Activated CD8-positive, alpha-beta T cell treated with anti-CD3 and anti-CD28 coated beads, Interleukin-2, amount 10 ng/mL, durations not matched to agents 7 days and 5 days (primary cell): ENCODE measurements at regions of chr3 and their contacts with region 1.

Region 1: GRCh38 chr3:52705688-52706686 is at the starts of genes GLT8D1 and SPCS1:
- DNase-seq: peak; percentile 87
- ATAC-seq: peak; percentile 93
- H3K4me3 Mint-ChIP-seq: peak within 1 kb of the TSS; percentile 96
- H3K27ac Mint-ChIP-seq: peak within 1 kb of the TSS; percentile 92
- H3K4me1 Mint-ChIP-seq: peaks cover 35% of the 10 kb centered on the region
- H3K27me3 Mint-ChIP-seq: no peaks in the 10 kb centered on the region
- total RNA-seq, gene GLT8D1: 36.4 to 38.2 TPM
- total RNA-seq, gene SPCS1: 96.1 to 105 TPM

Region 2: DNA sequence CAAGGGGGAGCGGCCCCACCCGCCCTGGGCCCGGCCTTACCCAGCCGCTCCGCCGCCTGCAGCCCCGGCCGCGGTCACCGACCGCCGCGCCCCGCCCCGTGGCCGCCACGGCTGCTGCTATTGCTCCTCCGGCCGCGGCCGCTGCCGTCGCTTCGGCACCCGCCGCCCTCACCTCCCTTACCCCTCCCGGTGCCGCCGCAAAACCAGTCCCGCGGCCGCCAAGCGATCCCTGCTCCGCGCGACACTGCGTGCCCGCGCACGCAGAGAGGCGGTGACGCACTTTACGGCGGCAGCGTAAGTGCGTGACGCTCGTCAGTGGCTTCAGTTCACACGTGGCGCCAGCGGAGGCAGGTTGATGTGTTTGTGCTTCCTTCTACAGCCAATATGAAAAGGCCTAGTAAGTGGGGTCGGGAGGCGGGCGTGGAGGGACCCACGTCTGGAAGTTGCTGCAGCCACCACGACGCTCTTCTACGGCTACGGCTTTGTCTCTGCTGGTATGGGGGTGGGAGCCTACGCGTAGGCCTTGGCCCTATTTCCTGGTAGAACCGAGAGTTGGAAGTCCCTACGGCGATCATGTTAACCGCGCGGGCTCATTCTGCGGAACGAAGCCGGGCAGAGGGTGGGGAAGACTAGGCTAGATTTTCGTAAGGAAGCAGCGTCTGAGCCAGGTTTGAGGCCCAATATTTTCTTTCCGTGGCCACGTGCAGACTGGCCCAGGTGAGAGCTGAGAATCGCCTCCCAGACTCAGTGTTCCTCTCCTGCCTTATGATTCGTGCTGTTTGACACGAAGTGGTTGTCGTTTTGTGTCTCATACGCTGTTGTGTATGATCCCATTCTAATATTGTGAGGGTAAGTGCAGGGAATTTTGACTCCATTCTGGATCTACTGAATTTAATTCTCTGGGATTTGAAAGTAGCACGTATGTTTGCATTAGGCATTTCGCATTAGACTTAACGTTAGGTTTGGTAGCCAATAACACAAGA is 20.0 kb before region 1 on chr3 and contains the starts of genes GNL3 and PBRM1:
- CTCF ChIA-PET with region 1: interaction called, 3 read pairs
- POLR2A ChIA-PET with region 1: interaction called, 25 read pairs
- DNase-seq: peak; percentile 95
- ATAC-seq: peak; percentile 84
- H3K4me3 Mint-ChIP-seq: peak within 1 kb of the TSS; percentile 91
- H3K27ac Mint-ChIP-seq: peak within 1 kb of the TSS; percentile 92
- H3K4me1 Mint-ChIP-seq: peaks cover 65% of the 10 kb centered on the region
- H3K27me3 Mint-ChIP-seq: no peaks in the 10 kb centered on the region
- total RNA-seq, gene GNL3: 85.5 to 86.2 TPM
- total RNA-seq, gene PBRM1: 83.2 to 91.8 TPM